ENCODE measurements at regions of chr2 and their contacts with region 1.

Region 1: GRCh38 chr2:201795607-201796477 is 10.5 kb upstream of the CDK15 start:
- DNase-seq: peak; percentile 71
- ATAC-seq: peak; percentile 51
- H3K4me3 ChIP-seq: no peak overlapping the region
- H3K27ac ChIP-seq: no peak overlapping the region
- H3K4me1 ChIP-seq: peaks cover 10% of the 10 kb centered on the region
- H3K27me3 ChIP-seq: no peaks in the 10 kb centered on the region
- CTCF ChIP-seq: peak; percentile 86
- POLR2A ChIP-seq: no peak
- RAD21 ChIP-seq: peak; percentile 92

Region 2: DNA sequence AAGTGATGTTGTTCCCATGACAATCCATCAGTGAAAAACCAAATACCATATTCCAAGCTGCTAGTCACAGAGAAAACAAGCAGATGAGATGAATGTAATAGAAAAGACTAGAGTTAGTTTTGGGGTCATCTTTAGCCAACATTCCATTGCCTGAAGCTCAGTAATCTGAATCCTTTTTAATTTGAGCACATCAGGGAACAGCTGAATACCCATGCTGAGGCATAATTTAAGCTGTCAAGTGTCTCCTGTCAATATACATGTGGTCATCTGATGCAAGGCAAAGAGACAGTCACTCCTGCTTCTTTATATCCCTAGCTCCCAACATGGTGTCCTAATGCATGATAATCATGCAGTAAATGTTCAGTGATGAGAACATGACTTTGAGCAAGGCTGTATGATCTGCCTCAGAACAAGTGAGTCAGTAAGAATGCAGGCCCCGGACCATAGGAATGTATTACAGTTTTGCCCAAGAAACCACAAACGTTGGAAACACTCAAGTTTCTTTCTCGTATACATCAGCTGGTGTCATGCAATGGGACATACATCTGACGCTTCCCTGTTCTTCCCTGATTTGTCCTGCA is 58.5 kb after region 1 on chr2:
- CTCF ChIA-PET with region 1: interaction called, 6 read pairs
- POLR2A ChIA-PET with region 1: no interaction called
- dilution Hi-C with region 1: no loop called
- in situ Hi-C with region 1: loop called (anchors 5 kb)
- intact Hi-C with region 1: loop called (anchors 1 kb)
- DNase-seq: peak; percentile 99
- ATAC-seq: peak; percentile 88
- H3K4me3 ChIP-seq: peak overlapping the region; percentile 38; the same call in 1 of the 2 replicates
- H3K27ac ChIP-seq: peak overlapping the region; percentile 77
- H3K4me1 ChIP-seq: peaks cover 38% of the 10 kb centered on the region
- H3K27me3 ChIP-seq: no peaks in the 10 kb centered on the region
- CTCF ChIP-seq: no peak
- POLR2A ChIP-seq: no peak
- RAD21 ChIP-seq: 0 out of 2 replicates have a peak, but pooled peaks have one; percentile 10

Region 3: DNA sequence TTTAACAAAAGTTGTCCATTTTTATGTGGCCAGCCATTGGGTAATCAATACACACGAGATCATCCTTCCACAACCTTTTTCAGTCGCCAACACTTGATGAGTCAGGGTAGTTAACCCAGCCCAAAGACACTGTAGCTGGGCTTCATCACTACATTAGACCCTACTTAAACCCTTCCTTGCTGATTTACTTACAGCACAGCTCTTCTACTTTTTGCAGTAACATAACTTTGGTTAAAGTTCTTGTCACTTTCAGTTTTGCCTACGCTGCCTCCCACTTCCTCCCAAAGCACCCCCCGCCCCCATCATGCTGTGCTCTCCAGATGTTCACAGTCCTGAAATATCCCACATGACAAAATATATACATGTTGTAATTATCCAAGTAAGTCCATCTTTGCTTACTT is 114.1 kb after region 1 on chr2:
- CTCF ChIA-PET with region 1: no interaction called
- POLR2A ChIA-PET with region 1: no interaction called
- dilution Hi-C with region 1: no loop called
- in situ Hi-C with region 1: no loop called
- intact Hi-C with region 1: loop called (anchors 2 kb)
- DNase-seq: peak; percentile 80
- ATAC-seq: peak; percentile 53
- H3K4me3 ChIP-seq: peak overlapping the region; percentile 42
- H3K27ac ChIP-seq: peak overlapping the region; percentile 76
- H3K4me1 ChIP-seq: peaks cover 11% of the 10 kb centered on the region
- H3K27me3 ChIP-seq: no peaks in the 10 kb centered on the region
- CTCF ChIP-seq: no peak
- POLR2A ChIP-seq: no peak
- RAD21 ChIP-seq: no peak

Region 4: GRCh38 chr2:202158796-202159195 is 363.0 kb after region 1 on chr2:
- CTCF ChIA-PET with region 1: no interaction called
- POLR2A ChIA-PET with region 1: no interaction called
- dilution Hi-C with region 1: no loop called
- in situ Hi-C with region 1: loop called (anchors 10 kb)
- intact Hi-C with region 1: no loop called
- DNase-seq: peak; percentile 46
- ATAC-seq: 0 out of 2 replicates have a peak, but pooled peaks have one; percentile 22
- H3K4me3 ChIP-seq: no peak overlapping the region
- H3K27ac ChIP-seq: no peak overlapping the region
- H3K4me1 ChIP-seq: peaks cover 12% of the 10 kb centered on the region
- H3K27me3 ChIP-seq: no peaks in the 10 kb centered on the region
- CTCF ChIP-seq: peak; percentile 54
- POLR2A ChIP-seq: no peak
- RAD21 ChIP-seq: peak; percentile 61

Region 5: DNA sequence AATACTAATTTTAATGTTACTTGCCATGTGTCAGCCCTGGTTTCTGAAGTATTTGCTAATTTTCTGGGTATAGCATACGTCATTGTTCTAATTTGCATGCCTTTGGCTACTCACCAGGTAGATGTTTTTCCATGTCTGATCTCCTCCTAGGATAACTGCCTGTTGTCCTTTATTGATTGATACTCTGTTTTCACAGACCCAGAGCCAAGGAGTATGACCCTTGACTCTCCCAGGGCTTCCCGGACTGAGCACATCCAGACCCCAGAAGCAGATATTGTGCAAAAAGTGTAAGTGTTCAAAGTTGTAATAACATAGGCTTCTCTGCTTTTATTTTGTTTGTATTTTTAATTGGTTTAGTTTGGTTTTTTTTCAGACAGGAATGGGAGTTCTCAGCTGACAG is 388.7 kb after region 1 on chr2:
- CTCF ChIA-PET with region 1: no interaction called
- POLR2A ChIA-PET with region 1: no interaction called
- dilution Hi-C with region 1: no loop called
- in situ Hi-C with region 1: loop called (anchors 5 kb)
- intact Hi-C with region 1: no loop called
- DNase-seq: no peak
- ATAC-seq: no peak
- H3K4me3 ChIP-seq: no peak overlapping the region
- H3K27ac ChIP-seq: no peak overlapping the region
- H3K4me1 ChIP-seq: peaks cover 10% of the 10 kb centered on the region
- H3K27me3 ChIP-seq: no peaks in the 10 kb centered on the region
- CTCF ChIP-seq: no peak
- POLR2A ChIP-seq: no peak
- RAD21 ChIP-seq: no peak